ENCODE measurements at regions of chr6 and their contacts with region 1.

Region 1: GRCh38 chr6:108782179-108783041 is 65.8 kb upstream of the ARMC2 start:
- DNase-seq: peak; percentile 91
- H3K4me3 Mint-ChIP-seq: peak overlapping the region; percentile 73
- H3K27ac Mint-ChIP-seq: no peak overlapping the region
- H3K4me1 Mint-ChIP-seq: peaks cover 11% of the 10 kb centered on the region
- H3K27me3 Mint-ChIP-seq: no peaks in the 10 kb centered on the region

Region 2: DNA sequence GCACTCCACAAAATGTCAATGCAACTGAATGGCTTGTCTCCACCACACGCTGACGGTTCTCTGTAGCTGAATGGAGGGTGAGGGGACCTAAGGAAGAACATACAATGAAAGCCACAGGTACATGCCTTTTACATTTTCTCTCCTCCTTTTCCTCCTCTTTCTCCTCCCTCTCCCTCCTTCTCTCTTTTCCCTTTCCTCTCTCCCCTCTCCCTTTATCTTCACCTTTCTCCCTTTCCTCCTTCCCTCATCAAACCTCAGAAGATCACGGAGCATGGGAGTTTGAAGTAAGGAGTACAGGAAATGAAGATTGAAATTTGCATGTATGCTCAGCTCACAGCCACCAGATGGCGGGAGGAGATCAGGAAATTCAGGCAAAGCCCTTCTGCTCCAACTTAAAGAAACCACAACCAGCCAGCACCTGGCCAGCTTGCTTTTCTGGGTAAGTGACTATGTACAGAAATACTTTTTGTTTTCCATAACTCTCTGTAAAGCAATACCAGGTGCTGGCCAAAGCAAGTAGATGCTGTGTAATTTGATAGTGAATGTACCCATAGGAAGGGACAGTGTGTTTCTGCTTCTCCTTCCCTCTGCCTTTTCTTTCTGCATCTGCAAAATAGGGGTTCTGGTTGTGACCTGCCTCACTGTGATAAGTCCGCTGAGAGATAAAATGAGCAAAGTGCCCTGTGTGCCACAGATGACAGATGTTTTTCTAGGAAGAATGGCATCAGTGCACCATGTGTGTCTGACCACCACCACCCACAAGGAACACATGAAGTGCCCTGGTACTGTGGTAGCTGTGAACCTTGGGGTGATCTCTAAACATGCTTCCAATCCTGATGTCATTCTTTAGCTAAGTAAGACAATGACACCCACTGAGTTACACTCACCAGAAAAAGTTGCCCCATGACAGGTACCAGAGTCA is 240.3 kb before region 1 on chr6:
- CTCF ChIA-PET with region 1: interaction called, 23 read pairs
- POLR2A ChIA-PET with region 1: no interaction called
- intact Hi-C with region 1: loop called (anchors 1 kb)
- DNase-seq: peak; percentile 79
- H3K4me3 Mint-ChIP-seq: peak overlapping the region; percentile 17
- H3K27ac Mint-ChIP-seq: no peak overlapping the region
- H3K4me1 Mint-ChIP-seq: peaks cover 7% of the 10 kb centered on the region
- H3K27me3 Mint-ChIP-seq: peaks cover 6% of the 10 kb centered on the region

Region 3: DNA sequence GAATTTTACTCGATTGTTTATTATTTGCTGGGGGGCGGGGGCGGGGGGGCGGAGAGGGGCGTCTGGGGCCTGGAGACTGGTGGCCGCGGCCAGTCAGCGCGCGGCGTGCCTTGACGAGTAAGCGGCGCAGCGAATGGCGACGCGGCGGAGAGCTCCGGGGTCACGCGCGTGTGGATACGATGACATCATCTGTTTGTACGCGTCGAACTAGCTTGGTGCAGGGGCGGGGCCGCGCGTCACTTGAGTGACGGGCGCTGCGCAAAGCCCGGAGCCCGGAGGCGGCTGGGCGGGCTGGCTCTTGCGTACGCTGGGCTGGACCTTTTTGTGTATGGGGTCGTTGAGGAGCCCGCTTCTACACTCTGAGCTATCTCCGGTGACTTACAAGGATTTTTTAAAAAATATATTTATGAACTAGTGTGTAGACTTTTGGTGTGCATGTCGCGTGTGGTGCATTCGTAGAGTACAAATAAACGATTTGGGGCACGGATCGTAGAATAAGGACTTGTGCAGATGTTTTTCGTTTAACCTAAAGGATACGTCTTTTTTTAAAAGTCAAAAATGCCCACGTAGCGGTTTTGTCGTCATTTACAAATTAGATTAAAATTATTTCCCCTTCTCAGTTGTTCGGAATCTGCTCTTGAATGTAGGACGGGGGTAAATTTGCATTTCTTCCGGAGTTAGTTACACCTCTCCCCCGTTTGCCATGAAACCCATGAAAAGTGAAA is 223.9 kb before region 1 on chr6:
- CTCF ChIA-PET with region 1: interaction called, 5 read pairs
- POLR2A ChIA-PET with region 1: no interaction called
- intact Hi-C with region 1: loop called (anchors 1 kb)
- DNase-seq: peak; percentile 97
- H3K4me3 Mint-ChIP-seq: peak overlapping the region; percentile 93
- H3K27ac Mint-ChIP-seq: peak overlapping the region; percentile 96
- H3K4me1 Mint-ChIP-seq: peaks cover 25% of the 10 kb centered on the region
- H3K27me3 Mint-ChIP-seq: no peaks in the 10 kb centered on the region

Region 4: GRCh38 chr6:108667993-108668392 is 114.4 kb before region 1 on chr6:
- CTCF ChIA-PET with region 1: no interaction called
- POLR2A ChIA-PET with region 1: no interaction called
- intact Hi-C with region 1: loop called (anchors 5 kb)
- DNase-seq: no peak
- H3K4me3 Mint-ChIP-seq: no peak overlapping the region
- H3K27ac Mint-ChIP-seq: no peak overlapping the region
- H3K4me1 Mint-ChIP-seq: peaks cover 56% of the 10 kb centered on the region
- H3K27me3 Mint-ChIP-seq: no peaks in the 10 kb centered on the region

Region 5: DNA sequence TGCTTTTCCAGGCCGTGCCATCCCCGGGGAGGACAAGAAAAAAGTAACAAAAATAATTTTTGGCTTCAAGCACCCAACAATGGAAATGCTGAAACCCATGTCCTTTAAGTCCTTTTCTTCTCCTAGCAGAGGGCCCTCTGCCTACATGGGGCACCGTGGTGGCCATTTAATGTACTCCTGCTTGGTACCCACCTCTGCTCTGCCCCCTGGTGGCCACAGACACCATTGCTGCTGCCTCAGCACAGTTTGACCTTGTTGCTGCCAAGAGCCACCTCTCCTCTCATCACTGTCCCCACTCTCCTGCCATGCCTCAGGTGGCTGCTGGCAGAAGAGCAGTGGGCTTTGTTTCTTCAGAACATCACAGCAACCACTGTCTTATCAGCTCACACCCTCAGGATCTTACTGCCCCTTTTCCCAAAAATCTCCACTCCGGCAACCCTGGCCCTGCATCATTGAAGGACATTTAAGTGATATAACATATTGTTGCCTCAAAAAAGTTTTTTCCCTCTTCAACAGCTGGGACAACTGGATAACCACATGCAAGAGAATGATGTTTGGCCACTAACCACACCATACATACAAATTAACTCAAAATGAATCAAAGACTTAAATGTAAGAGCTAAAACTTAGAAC is 52.9 kb after region 1 on chr6:
- CTCF ChIA-PET with region 1: interaction called, 3 read pairs
- POLR2A ChIA-PET with region 1: no interaction called
- intact Hi-C with region 1: loop called (anchors 1 kb)
- DNase-seq: peak; percentile 91
- H3K4me3 Mint-ChIP-seq: no peak overlapping the region
- H3K27ac Mint-ChIP-seq: no peak overlapping the region
- H3K4me1 Mint-ChIP-seq: peaks cover 13% of the 10 kb centered on the region
- H3K27me3 Mint-ChIP-seq: no peaks in the 10 kb centered on the region